Mammary epithelial cell (primary cell): ENCODE measurements at regions of chr4 and their contacts with region 1.

Region 1: GRCh38 chr4:119300101-119300978 is 21.6 kb downstream of the FABP2 start:
- DNase-seq: peak; percentile 98
- H3K4me3 ChIP-seq: peak overlapping the region; percentile 64 to 91 (median 84)
- H3K27ac ChIP-seq: peak overlapping the region; percentile 92
- H3K4me1 ChIP-seq: peaks cover 3% of the 10 kb centered on the region
- H3K27me3 ChIP-seq: no peaks in the 10 kb centered on the region
- CTCF ChIP-seq: peak in 1 of 2 donors; percentile 9

Region 2: GRCh38 chr4:118888666-118889311 is 411.6 kb before region 1 on chr4 and contains the start of gene SYNPO2:
- CTCF ChIA-PET with region 1: no interaction called
- dilution Hi-C with region 1: no loop called
- in situ Hi-C with region 1: no loop called
- intact Hi-C with region 1: no loop called
- DNase-seq: peak; percentile 78
- H3K4me3 ChIP-seq: peak within 1 kb of the TSS; percentile 44 to 62 (median 46)
- H3K27ac ChIP-seq: no peak within 1 kb of the TSS
- H3K4me1 ChIP-seq: peaks cover 15% of the 10 kb centered on the region
- H3K27me3 ChIP-seq: no peaks in the 10 kb centered on the region
- CTCF ChIP-seq: peak in 1 of 2 donors; percentile 8
- total RNA-seq, gene SYNPO2: 3.3 to 11.2 TPM

Region 3: GRCh38 chr4:119490335-119490734 is 190.0 kb after region 1 on chr4:
- CTCF ChIA-PET with region 1: no interaction called
- dilution Hi-C with region 1: no loop called
- in situ Hi-C with region 1: loop called in 1 of 2 experiments (anchors 25 kb)
- intact Hi-C with region 1: no loop called
- DNase-seq: no peak
- H3K4me3 ChIP-seq: no peak overlapping the region
- H3K27ac ChIP-seq: no peak overlapping the region
- H3K4me1 ChIP-seq: no peaks in the 10 kb centered on the region
- H3K27me3 ChIP-seq: no peaks in the 10 kb centered on the region
- CTCF ChIP-seq: peak in 1 of 2 donors; percentile 27

Region 4: DNA sequence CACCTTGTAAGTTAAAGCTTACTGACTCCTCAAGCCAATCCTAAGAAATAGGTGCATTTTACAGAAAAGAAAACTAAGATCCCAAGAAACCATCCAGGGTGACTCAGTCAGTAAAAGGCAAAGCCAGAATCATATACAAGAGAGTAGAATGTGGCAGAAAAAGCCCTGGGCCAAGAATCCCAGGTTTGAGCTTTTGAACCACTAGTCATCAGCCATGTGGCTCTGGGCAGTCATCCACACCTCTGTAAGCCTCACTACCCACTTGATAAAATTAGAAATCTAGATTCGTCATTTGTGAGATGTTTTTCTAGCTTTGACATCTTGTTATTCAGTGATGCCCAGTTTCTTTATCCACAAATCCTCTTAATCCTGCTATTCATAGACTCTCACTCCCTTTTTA is 450.4 kb after region 1 on chr4:
- CTCF ChIA-PET with region 1: no interaction called
- dilution Hi-C with region 1: no loop called
- in situ Hi-C with region 1: loop called in 1 of 2 experiments (anchors 25 kb)
- intact Hi-C with region 1: no loop called
- DNase-seq: peak; percentile 4
- H3K4me3 ChIP-seq: no peak overlapping the region
- H3K27ac ChIP-seq: no peak overlapping the region
- H3K4me1 ChIP-seq: no peaks in the 10 kb centered on the region
- H3K27me3 ChIP-seq: peaks cover 2% of the 10 kb centered on the region
- CTCF ChIP-seq: no peak